IMR-90 (cell line): ENCODE measurements at regions of chr6 and their contacts with region 1.

Region 1: DNA sequence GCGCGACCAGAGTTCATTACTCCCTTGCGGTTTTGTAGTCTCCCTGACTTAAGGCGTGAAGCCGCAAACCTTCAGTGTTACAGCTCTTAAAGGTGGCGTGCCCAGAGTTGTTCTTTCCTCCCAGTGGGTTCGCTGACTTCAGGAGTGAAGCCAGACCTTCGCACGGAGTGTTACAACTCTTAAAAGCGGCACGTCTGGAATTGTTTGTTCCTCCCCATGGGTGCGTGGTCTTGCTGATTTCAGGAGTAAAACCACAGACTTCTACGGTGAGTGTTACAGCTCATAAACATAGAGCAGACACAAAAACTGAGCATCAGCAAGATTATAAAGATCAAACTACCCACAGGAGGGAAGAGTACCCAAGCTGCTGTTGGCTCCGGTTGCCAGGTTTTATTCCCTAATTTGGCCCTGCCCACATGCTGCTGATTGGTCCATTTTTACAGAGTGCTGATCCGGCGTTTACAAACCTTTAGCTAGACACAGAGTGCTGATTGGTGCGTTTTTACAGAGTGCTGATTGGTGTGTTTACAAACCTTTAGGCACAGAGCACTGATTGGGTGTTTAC is 10.4 kb downstream of the TMEM14C start:
- DNase-seq: no peak
- ATAC-seq: no peak
- H3K4me3 ChIP-seq: no peak overlapping the region
- H3K27ac ChIP-seq: no peak overlapping the region
- H3K4me1 ChIP-seq: peaks cover 3% of the 10 kb centered on the region; the same call in 1 of the 2 replicates
- H3K27me3 ChIP-seq: no peaks in the 10 kb centered on the region
- CTCF ChIP-seq: no peak
- POLR2A ChIP-seq: no peak
- RAD21 ChIP-seq: no peak

Region 2: DNA sequence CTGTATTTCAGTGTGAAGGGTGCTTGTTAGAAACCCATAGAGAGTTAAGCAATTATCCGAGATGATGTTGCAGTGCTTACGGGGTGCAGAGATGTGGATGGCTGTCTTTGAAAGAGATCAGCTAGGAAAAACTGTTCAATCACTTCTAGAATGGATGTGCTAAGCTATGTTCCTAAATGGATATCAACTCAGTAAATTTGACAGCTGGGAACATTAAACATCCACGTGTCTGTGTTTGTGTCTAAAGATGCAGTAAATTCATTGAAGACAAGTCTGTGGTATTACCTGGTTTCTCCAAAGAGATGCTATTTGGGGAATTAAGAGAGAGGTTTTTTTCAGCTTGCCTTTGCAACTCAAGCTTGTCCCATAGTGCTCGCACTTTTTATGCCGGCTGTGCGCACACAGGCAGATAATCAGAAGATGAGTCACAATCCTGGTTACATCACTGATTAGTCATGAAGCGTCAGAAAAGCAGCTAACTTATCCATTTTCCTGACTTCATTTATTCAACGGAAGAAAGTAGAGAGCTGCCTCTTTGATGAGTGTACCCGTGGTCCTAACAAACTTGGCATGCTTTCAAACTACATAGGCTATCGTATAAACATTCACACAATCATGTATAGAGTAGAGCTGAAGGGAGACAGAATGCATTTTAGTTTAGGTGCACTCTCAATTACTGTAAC is 1606.2 kb before region 1 on chr6:
- CTCF ChIA-PET with region 1: no interaction called
- POLR2A ChIA-PET with region 1: no interaction called
- dilution Hi-C with region 1: no loop called
- in situ Hi-C with region 1: no loop called
- intact Hi-C with region 1: loop called (anchors 5 kb)
- DNase-seq: peak; percentile 99
- ATAC-seq: peak; percentile 93
- H3K4me3 ChIP-seq: no peak overlapping the region
- H3K27ac ChIP-seq: no peak overlapping the region
- H3K4me1 ChIP-seq: no peaks in the 10 kb centered on the region
- H3K27me3 ChIP-seq: no peaks in the 10 kb centered on the region
- CTCF ChIP-seq: no peak
- POLR2A ChIP-seq: no peak
- RAD21 ChIP-seq: no peak

Region 3: GRCh38 chr6:10451394-10451793 is 281.8 kb before region 1 on chr6:
- CTCF ChIA-PET with region 1: no interaction called
- POLR2A ChIA-PET with region 1: interaction called, 11 read pairs
- dilution Hi-C with region 1: no loop called
- in situ Hi-C with region 1: no loop called
- intact Hi-C with region 1: no loop called
- DNase-seq: no peak
- ATAC-seq: no peak
- H3K4me3 ChIP-seq: no peak overlapping the region
- H3K27ac ChIP-seq: no peak overlapping the region
- H3K4me1 ChIP-seq: no peaks in the 10 kb centered on the region
- H3K27me3 ChIP-seq: no peaks in the 10 kb centered on the region
- CTCF ChIP-seq: no peak
- POLR2A ChIP-seq: no peak
- RAD21 ChIP-seq: no peak